GM12878 (cell line): ENCODE measurements at regions of chr22 and their contacts with region 1.

Region 1: DNA sequence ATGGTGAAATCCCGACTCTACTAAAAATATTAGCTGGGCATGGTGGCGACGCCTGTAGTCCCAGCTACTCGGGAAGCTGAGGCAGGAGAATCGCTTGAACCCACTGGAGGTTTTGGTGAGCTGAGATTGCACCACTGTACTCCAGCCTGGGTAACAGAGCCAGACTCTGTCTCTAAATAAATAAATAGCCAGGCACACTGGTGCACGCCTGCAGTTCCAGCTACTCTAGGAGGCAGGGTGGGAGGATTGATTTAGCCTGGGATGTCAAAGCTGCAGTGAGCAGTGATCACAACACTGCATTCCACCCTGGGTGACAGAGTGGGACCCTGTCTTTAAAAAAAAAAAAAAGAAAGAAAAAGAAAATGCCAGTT is 17.4 kb downstream of the SUSD2 start:
- DNase-seq: no peak
- ATAC-seq: no peak
- H3K4me3 ChIP-seq: no peak overlapping the region
- H3K27ac ChIP-seq: no peak overlapping the region
- H3K4me1 ChIP-seq: peaks cover 3% of the 10 kb centered on the region
- H3K27me3 ChIP-seq: no peaks in the 10 kb centered on the region
- CTCF ChIP-seq: no peak
- EP300 ChIP-seq: no peak
- POLR2A ChIP-seq: no peak
- RAD21 ChIP-seq: no peak

Region 2: GRCh38 chr22:23722724-23723123 is 475.9 kb before region 1 on chr22:
- CTCF ChIA-PET with region 1: no interaction called
- POLR2A ChIA-PET with region 1: no interaction called
- RAD21 ChIA-PET with region 1: no interaction called
- SMC1A ChIA-PET with region 1: no interaction called
- in situ Hi-C with region 1: no loop called
- intact Hi-C with region 1: no loop called
- DNase-seq: no peak
- ATAC-seq: no peak
- H3K4me3 ChIP-seq: no peak overlapping the region
- H3K27ac ChIP-seq: no peak overlapping the region
- H3K4me1 ChIP-seq: no peaks in the 10 kb centered on the region
- H3K27me3 ChIP-seq: no peaks in the 10 kb centered on the region
- CTCF ChIP-seq: no peak
- EP300 ChIP-seq: no peak
- POLR2A ChIP-seq: no peak
- RAD21 ChIP-seq: no peak

Region 3: GRCh38 chr22:24236656-24237055 is 38.0 kb after region 1 on chr22:
- CTCF ChIA-PET with region 1: interaction called, 11 read pairs
- POLR2A ChIA-PET with region 1: no interaction called
- RAD21 ChIA-PET with region 1: no interaction called
- SMC1A ChIA-PET with region 1: no interaction called
- in situ Hi-C with region 1: loop called (anchors 5 kb)
- intact Hi-C with region 1: no loop called
- DNase-seq: no peak
- ATAC-seq: no peak
- H3K4me3 ChIP-seq: no peak overlapping the region
- H3K27ac ChIP-seq: no peak overlapping the region
- H3K4me1 ChIP-seq: no peaks in the 10 kb centered on the region
- H3K27me3 ChIP-seq: no peaks in the 10 kb centered on the region
- CTCF ChIP-seq: no peak
- EP300 ChIP-seq: no peak
- POLR2A ChIP-seq: no peak
- RAD21 ChIP-seq: no peak